Transverse colon (tissue), 4 donors: ENCODE measurements at regions of chr17 and their contacts with region 1.

Region 1: DNA sequence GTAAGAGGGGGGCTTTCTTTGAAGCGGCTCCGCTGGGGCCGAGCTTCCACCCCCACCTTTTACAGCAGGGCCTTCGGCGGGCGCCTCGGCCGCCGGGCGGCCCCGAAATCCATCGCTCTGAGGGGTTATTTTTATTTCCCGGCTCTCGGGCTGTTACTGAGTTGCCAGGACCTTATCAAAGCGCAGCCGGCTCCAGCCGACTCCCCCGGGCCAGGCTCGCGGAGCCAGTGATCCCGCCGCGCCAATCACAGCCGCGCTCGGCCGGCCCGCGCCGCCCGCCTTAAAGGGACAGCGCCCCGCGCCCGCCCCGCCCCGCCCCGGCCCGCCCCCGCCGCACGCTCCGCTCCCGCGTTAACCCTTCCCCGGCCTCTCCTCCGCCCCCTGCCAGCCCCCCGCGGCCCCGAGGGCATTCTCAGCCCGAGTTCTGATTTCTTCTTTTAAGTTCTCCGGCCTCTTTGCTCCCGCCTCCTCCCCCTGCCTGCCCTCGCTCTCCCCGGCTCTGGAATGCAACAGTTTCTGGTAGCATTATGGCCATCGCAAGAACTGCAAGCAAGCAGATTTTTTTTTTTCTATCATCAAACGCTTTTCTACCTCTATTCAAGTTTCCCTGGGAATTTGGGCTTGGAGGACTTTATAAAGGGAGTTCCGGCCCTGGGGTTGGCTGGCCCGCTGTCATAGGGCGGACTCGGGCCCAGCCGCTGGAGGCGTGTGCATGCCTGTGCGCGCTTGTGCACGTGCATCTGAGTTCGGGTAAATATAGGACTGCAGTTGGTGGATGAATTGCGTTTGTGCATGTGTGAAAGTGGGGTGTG is at the start of gene AXIN2:
- DNase-seq: peak; percentile 92
- H3K4me3 ChIP-seq: peak within 1 kb of the TSS; percentile 78 to 99 (median 89)
- H3K27ac ChIP-seq: no peak within 1 kb of the TSS
- H3K4me1 ChIP-seq: peaks cover 10 to 38% (median 16%) of the 10 kb centered on the region in 4 donors
- H3K27me3 ChIP-seq: no peaks in the 10 kb centered on the region
- CTCF ChIP-seq: peak; percentile 13 to 85 (median 39)
- EP300 ChIP-seq: no peak
- POLR2A ChIP-seq: no peak
- total RNA-seq, gene AXIN2: 17.6 to 87.6 (median 23.8) TPM

Region 2: DNA sequence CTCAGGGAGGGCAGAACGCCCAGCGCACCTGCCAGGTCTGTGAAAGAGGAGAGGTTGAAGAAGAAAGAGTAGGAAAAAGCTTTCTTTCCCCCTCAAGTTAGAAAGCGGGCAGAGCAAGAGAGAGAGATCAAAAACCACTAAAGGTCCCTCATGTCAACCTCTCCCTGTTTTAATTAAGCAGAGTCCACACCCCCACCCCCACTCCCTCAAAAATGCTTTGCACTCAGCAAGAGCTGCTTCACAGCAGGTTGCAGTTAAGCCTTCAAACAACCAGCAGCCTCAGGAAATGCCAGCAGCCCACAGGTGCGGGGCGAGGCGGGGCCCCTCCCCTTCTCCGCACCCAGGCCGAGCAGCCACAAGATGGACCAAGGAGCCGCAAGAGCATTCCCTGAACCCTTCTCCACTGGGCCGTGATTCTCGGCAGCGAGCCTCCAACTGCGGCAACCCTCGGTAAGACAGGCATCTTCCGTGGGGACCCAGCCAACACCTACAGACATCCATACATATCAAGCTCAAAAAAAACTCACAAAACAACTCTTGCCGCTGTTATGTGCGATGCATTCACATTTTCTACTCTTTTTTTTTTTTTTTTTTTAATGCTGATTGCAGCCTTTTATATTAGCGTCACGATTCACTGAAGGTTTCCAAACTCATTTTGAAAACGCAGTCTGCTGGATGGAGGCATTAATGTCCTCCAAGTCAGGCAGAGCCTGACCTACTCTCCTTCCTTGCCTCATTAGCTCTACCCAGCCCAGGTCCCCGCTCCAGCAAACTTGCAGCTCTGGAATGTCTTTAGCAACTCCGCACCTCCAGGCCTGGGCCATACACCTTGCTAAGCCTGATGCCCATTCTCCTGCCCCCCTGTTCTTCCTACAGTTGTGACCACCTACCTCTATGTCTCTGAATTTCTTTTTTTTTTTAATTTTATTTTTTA is 66.2 kb before region 1 on chr17:
- in situ Hi-C with region 1: no loop called
- intact Hi-C with region 1: no loop called
- DNase-seq: peak; percentile 39
- H3K4me3 ChIP-seq: no peak overlapping the region
- H3K27ac ChIP-seq: no peak overlapping the region
- H3K4me1 ChIP-seq: peaks cover 0 to 5% (median 2%) of the 10 kb centered on the region in 4 donors
- H3K27me3 ChIP-seq: no peaks in the 10 kb centered on the region
- CTCF ChIP-seq: peak in 1 of 5 experiments; percentile 25
- EP300 ChIP-seq: no peak
- POLR2A ChIP-seq: no peak

Region 3: DNA sequence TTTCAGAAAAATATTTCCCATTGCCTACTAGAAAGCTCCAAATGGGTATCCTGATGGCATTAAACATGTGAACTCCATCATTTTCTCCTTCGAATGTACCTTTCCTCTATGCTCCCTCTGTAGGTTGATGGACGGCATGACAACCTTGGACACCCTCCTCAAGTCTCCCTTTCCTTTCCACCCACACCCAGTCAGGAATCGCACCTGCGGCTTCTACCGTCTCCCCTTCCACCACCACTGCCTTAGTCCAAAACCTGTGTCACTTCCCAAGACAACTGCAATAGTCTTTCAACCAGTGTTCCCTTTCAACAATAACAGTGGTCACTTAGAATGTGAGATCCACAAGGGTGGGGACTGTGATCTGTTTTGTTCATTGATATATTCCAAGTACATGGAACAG is 233.0 kb after region 1 on chr17:
- in situ Hi-C with region 1: loop called in 1 of 4 experiments (anchors 25 kb)
- intact Hi-C with region 1: no loop called
- DNase-seq: no peak
- H3K4me3 ChIP-seq: no peak overlapping the region
- H3K27ac ChIP-seq: no peak overlapping the region
- H3K4me1 ChIP-seq: no peaks in the 10 kb centered on the region
- H3K27me3 ChIP-seq: no peaks in the 10 kb centered on the region
- CTCF ChIP-seq: peak; percentile 30 to 64 (median 53)
- EP300 ChIP-seq: no peak
- POLR2A ChIP-seq: no peak

Region 4: GRCh38 chr17:66165513-66166123 is 604.0 kb after region 1 on chr17:
- in situ Hi-C with region 1: loop called in 2 of 4 experiments (anchors 25 kb)
- intact Hi-C with region 1: no loop called
- DNase-seq: no peak
- H3K4me3 ChIP-seq: no peak overlapping the region
- H3K27ac ChIP-seq: no peak overlapping the region
- H3K4me1 ChIP-seq: no peaks in the 10 kb centered on the region
- H3K27me3 ChIP-seq: no peaks in the 10 kb centered on the region
- CTCF ChIP-seq: peak; percentile 64 to 83 (median 72)
- EP300 ChIP-seq: no peak
- POLR2A ChIP-seq: no peak